ENCODE measurements at regions of chr14 and their contacts with region 1.

Region 1: GRCh38 chr14:88667555-88668273 is 104.9 kb downstream of the ZC3H14 start:
- DNase-seq: peak in 8 of 9 experiments; percentile 19 to 76 (median 41)
- ATAC-seq: peak; percentile 67
- H3K4me3 ChIP-seq: no peak overlapping the region
- H3K4me3 Mint-ChIP-seq: no peak overlapping the region
- H3K27ac ChIP-seq: no peak overlapping the region
- H3K27ac Mint-ChIP-seq: no peak overlapping the region
- H3K4me1 ChIP-seq: no peaks in the 10 kb centered on the region
- H3K4me1 Mint-ChIP-seq: no peaks in the 10 kb centered on the region
- H3K27me3 ChIP-seq: no peaks in the 10 kb centered on the region
- H3K27me3 Mint-ChIP-seq: no peaks in the 10 kb centered on the region
- CTCF ChIP-seq: peak; percentile 72

Region 2: DNA sequence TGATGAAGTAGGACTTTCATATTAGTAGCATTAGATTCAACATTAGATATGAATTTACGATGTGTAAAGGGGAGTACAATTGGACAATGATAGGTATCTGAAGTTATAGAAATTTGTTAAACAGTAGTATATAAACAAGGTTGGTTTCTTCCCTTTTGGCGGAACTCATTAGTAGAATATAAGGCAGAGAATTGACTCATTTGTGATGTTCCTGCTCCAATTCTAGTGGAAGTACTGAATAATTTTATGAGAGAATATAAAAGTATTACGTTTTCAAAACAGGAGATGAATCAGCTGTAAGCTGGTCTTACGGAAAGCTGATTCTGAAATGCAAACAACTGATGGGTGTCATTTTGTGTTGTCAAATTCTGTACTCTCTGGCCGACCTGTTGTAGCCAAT is 91.5 kb before region 1 on chr14:
- CTCF ChIA-PET with region 1: no interaction called
- POLR2A ChIA-PET with region 1: no interaction called
- intact Hi-C with region 1: no loop called
- DNase-seq: no peak
- ATAC-seq: no peak
- H3K4me3 ChIP-seq: no peak overlapping the region
- H3K4me3 Mint-ChIP-seq: no peak overlapping the region
- H3K27ac ChIP-seq: no peak overlapping the region
- H3K27ac Mint-ChIP-seq: no peak overlapping the region
- H3K4me1 ChIP-seq: no peaks in the 10 kb centered on the region
- H3K4me1 Mint-ChIP-seq: no peaks in the 10 kb centered on the region
- H3K27me3 ChIP-seq: no peaks in the 10 kb centered on the region
- H3K27me3 Mint-ChIP-seq: no peaks in the 10 kb centered on the region
- CTCF ChIP-seq: no peak

Region 3: GRCh38 chr14:88682495-88683114 is 14.9 kb after region 1 on chr14:
- CTCF ChIA-PET with region 1: interaction called, 23 read pairs
- POLR2A ChIA-PET with region 1: interaction called, 3 read pairs
- intact Hi-C with region 1: no loop called
- DNase-seq: peak in 1 of 9 experiments; percentile 11
- ATAC-seq: no peak
- H3K4me3 ChIP-seq: no peak overlapping the region
- H3K4me3 Mint-ChIP-seq: no peak overlapping the region
- H3K27ac ChIP-seq: no peak overlapping the region
- H3K27ac Mint-ChIP-seq: no peak overlapping the region
- H3K4me1 ChIP-seq: no peaks in the 10 kb centered on the region
- H3K4me1 Mint-ChIP-seq: no peaks in the 10 kb centered on the region
- H3K27me3 ChIP-seq: no peaks in the 10 kb centered on the region
- H3K27me3 Mint-ChIP-seq: no peaks in the 10 kb centered on the region
- CTCF ChIP-seq: no peak

Region 4: GRCh38 chr14:88792572-88793258 is 125.0 kb after region 1 on chr14 and contains the start of gene EML5:
- CTCF ChIA-PET with region 1: interaction called, 11 read pairs
- POLR2A ChIA-PET with region 1: no interaction called
- intact Hi-C with region 1: loop called in 1 of 2 experiments (anchors 2 kb)
- DNase-seq: peak; percentile 64 to 90 (median 81)
- ATAC-seq: peak; percentile 86
- H3K4me3 ChIP-seq: peak within 1 kb of the TSS; percentile 72 to 86
- H3K4me3 Mint-ChIP-seq: peak within 1 kb of the TSS; percentile 93
- H3K27ac ChIP-seq: peak within 1 kb of the TSS; percentile 53
- H3K27ac Mint-ChIP-seq: peak within 1 kb of the TSS; percentile 80
- H3K4me1 ChIP-seq: peaks cover 9% of the 10 kb centered on the region
- H3K4me1 Mint-ChIP-seq: peaks cover 22% of the 10 kb centered on the region
- H3K27me3 ChIP-seq: no peaks in the 10 kb centered on the region
- H3K27me3 Mint-ChIP-seq: no peaks in the 10 kb centered on the region
- CTCF ChIP-seq: peak; percentile 15
- total RNA-seq, gene EML5: 2.5 to 3.5 TPM

Region 5: DNA sequence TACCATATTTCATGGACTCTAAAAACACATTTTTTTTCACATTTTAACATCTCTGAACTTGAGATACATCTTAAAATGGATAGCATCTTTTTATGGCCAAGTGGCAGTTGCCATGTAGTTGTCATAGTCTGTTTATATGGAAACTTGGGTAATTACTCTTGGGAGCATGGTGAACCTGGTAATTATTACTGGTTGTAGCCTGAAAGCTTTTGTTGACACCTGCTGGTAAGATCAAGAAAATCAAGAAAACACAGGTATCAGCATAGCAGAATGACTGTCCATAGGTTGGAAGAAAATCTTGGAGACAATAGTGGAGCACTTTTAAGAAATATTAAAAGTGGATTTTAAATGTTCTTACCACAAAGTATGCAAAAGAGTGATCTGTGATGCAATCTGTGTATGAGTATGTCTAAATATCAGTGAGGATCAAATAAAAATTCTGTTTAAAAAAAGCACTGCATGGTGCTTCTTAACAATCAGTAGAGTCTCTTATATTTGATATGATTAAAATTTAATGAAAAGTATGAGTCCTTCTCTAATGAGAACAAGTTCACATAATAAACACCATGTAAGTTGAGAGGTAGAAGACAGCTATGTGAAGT is 200.9 kb after region 1 on chr14:
- CTCF ChIA-PET with region 1: interaction called, 73 read pairs
- POLR2A ChIA-PET with region 1: no interaction called
- intact Hi-C with region 1: loop called (anchors 1 to 2 kb)
- DNase-seq: peak in 2 of 9 experiments; percentile 21 to 36
- ATAC-seq: no peak
- H3K4me3 ChIP-seq: no peak overlapping the region
- H3K4me3 Mint-ChIP-seq: no peak overlapping the region
- H3K27ac ChIP-seq: no peak overlapping the region
- H3K27ac Mint-ChIP-seq: no peak overlapping the region
- H3K4me1 ChIP-seq: no peaks in the 10 kb centered on the region
- H3K4me1 Mint-ChIP-seq: no peaks in the 10 kb centered on the region
- H3K27me3 ChIP-seq: no peaks in the 10 kb centered on the region
- H3K27me3 Mint-ChIP-seq: no peaks in the 10 kb centered on the region
- CTCF ChIP-seq: peak; percentile 15

Region 6: GRCh38 chr14:89013084-89013504 is 345.4 kb after region 1 on chr14:
- CTCF ChIA-PET with region 1: no interaction called
- POLR2A ChIA-PET with region 1: no interaction called
- intact Hi-C with region 1: loop called in 1 of 2 experiments (anchors 10 kb)
- DNase-seq: peak in 1 of 9 experiments; percentile 16
- ATAC-seq: no peak
- H3K4me3 ChIP-seq: no peak overlapping the region
- H3K4me3 Mint-ChIP-seq: no peak overlapping the region
- H3K27ac ChIP-seq: no peak overlapping the region
- H3K27ac Mint-ChIP-seq: no peak overlapping the region
- H3K4me1 ChIP-seq: no peaks in the 10 kb centered on the region
- H3K4me1 Mint-ChIP-seq: no peaks in the 10 kb centered on the region
- H3K27me3 ChIP-seq: no peaks in the 10 kb centered on the region
- H3K27me3 Mint-ChIP-seq: peaks cover 21% of the 10 kb centered on the region
- CTCF ChIP-seq: no peak

Region 7: DNA sequence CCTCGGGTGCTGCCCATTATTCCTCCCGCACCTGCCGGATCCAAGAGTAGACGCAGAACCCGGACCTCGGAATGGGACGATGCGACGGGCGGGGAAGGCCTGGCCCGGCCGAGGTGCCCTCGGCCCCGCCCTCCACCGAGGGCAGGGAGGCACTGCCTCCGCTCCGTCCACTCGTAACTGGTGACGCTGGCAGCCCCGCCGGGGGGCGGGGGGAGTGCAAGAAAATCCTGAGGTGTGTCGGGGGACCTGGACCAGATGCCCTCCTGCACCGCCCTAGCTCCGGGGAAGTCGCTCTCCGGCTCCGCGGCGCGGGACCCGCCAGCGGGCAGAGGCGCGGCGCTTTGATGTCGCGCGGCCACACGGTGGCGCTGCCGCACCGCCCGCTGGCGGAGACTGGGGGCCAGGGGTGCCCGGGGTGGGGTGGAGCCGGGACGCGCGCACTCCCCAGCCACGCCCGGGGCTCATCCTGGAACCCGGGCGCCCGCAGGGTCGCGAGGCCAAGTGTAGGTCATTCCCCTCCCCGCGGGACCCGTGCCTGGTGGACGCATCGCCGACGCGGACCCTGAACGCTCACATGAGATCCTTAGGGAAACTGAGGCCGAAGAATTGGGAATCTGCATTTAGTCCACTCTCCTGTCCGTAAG is 359.5 kb after region 1 on chr14:
- CTCF ChIA-PET with region 1: interaction called, 7 read pairs
- POLR2A ChIA-PET with region 1: no interaction called
- intact Hi-C with region 1: loop called in 1 of 2 experiments (anchors 10 kb)
- DNase-seq: peak; percentile 26 to 77 (median 57)
- ATAC-seq: peak; percentile 91
- H3K4me3 ChIP-seq: peak overlapping the region; percentile 33 to 61
- H3K4me3 Mint-ChIP-seq: peak overlapping the region; percentile 69
- H3K27ac ChIP-seq: no peak overlapping the region
- H3K27ac Mint-ChIP-seq: no peak overlapping the region
- H3K4me1 ChIP-seq: peaks cover 13% of the 10 kb centered on the region
- H3K4me1 Mint-ChIP-seq: peaks cover 3% of the 10 kb centered on the region
- H3K27me3 ChIP-seq: peaks cover 21 to 23% of the 10 kb centered on the region in 2 experiments
- H3K27me3 Mint-ChIP-seq: peaks cover 72% of the 10 kb centered on the region
- CTCF ChIP-seq: peak; percentile 74

Region 8: GRCh38 chr14:89540830-89541470 is 873.2 kb after region 1 on chr14:
- CTCF ChIA-PET with region 1: no interaction called
- POLR2A ChIA-PET with region 1: no interaction called
- intact Hi-C with region 1: no loop called
- DNase-seq: no peak
- ATAC-seq: no peak
- H3K4me3 ChIP-seq: no peak overlapping the region
- H3K4me3 Mint-ChIP-seq: no peak overlapping the region
- H3K27ac ChIP-seq: no peak overlapping the region
- H3K27ac Mint-ChIP-seq: no peak overlapping the region
- H3K4me1 ChIP-seq: peaks cover 12% of the 10 kb centered on the region
- H3K4me1 Mint-ChIP-seq: peaks cover 81% of the 10 kb centered on the region
- H3K27me3 ChIP-seq: no peaks in the 10 kb centered on the region
- H3K27me3 Mint-ChIP-seq: no peaks in the 10 kb centered on the region
- CTCF ChIP-seq: no peak

Region 9: GRCh38 chr14:89915114-89915878 is 1247.6 kb after region 1 on chr14:
- CTCF ChIA-PET with region 1: no interaction called
- POLR2A ChIA-PET with region 1: no interaction called
- intact Hi-C with region 1: loop called in 1 of 2 experiments (anchors 1 kb)
- DNase-seq: peak; percentile 24 to 74 (median 60)
- ATAC-seq: peak; percentile 62
- H3K4me3 ChIP-seq: no peak overlapping the region
- H3K4me3 Mint-ChIP-seq: no peak overlapping the region
- H3K27ac ChIP-seq: no peak overlapping the region
- H3K27ac Mint-ChIP-seq: no peak overlapping the region
- H3K4me1 ChIP-seq: peaks cover 3% of the 10 kb centered on the region
- H3K4me1 Mint-ChIP-seq: peaks cover 3% of the 10 kb centered on the region
- H3K27me3 ChIP-seq: no peaks in the 10 kb centered on the region
- H3K27me3 Mint-ChIP-seq: peaks cover 2% of the 10 kb centered on the region
- CTCF ChIP-seq: peak; percentile 97